ENCODE measurements at regions of chr3 and their contacts with region 1.

Region 1: GRCh38 chr3:194315088-194315964 is 35.8 kb downstream of the CPN2 start:
- DNase-seq: peak; percentile 98
- H3K4me3 Mint-ChIP-seq: peak overlapping the region; percentile 69
- H3K27ac Mint-ChIP-seq: peak overlapping the region; percentile 87
- H3K4me1 Mint-ChIP-seq: peaks cover 36% of the 10 kb centered on the region
- H3K27me3 Mint-ChIP-seq: no peaks in the 10 kb centered on the region
- CTCF ChIP-seq: peak; percentile 99

Region 2: GRCh38 chr3:193665370-193665989 is 649.8 kb before region 1 on chr3:
- CTCF ChIA-PET with region 1: interaction called, 20 read pairs
- intact Hi-C with region 1: loop called (anchors 2 kb)
- DNase-seq: no peak
- H3K4me3 Mint-ChIP-seq: no peak overlapping the region
- H3K27ac Mint-ChIP-seq: no peak overlapping the region
- H3K4me1 Mint-ChIP-seq: no peaks in the 10 kb centered on the region
- H3K27me3 Mint-ChIP-seq: no peaks in the 10 kb centered on the region
- CTCF ChIP-seq: peak; percentile 74

Region 3: GRCh38 chr3:193842029-193842798 is 473.1 kb before region 1 on chr3:
- CTCF ChIA-PET with region 1: interaction called, 17 read pairs
- intact Hi-C with region 1: loop called (anchors 5 kb)
- DNase-seq: no peak
- H3K4me3 Mint-ChIP-seq: peak overlapping the region; percentile 59
- H3K27ac Mint-ChIP-seq: peak overlapping the region; percentile 96
- H3K4me1 Mint-ChIP-seq: peaks cover 94% of the 10 kb centered on the region
- H3K27me3 Mint-ChIP-seq: no peaks in the 10 kb centered on the region
- CTCF ChIP-seq: no peak

Region 4: GRCh38 chr3:194009892-194010533 is 305.3 kb before region 1 on chr3:
- CTCF ChIA-PET with region 1: interaction called, 3 read pairs
- intact Hi-C with region 1: loop called (anchors 5 kb)
- DNase-seq: peak; percentile 34
- H3K4me3 Mint-ChIP-seq: no peak overlapping the region
- H3K27ac Mint-ChIP-seq: peak overlapping the region; percentile 15
- H3K4me1 Mint-ChIP-seq: peaks cover 48% of the 10 kb centered on the region
- H3K27me3 Mint-ChIP-seq: no peaks in the 10 kb centered on the region
- CTCF ChIP-seq: no peak

Region 5: DNA sequence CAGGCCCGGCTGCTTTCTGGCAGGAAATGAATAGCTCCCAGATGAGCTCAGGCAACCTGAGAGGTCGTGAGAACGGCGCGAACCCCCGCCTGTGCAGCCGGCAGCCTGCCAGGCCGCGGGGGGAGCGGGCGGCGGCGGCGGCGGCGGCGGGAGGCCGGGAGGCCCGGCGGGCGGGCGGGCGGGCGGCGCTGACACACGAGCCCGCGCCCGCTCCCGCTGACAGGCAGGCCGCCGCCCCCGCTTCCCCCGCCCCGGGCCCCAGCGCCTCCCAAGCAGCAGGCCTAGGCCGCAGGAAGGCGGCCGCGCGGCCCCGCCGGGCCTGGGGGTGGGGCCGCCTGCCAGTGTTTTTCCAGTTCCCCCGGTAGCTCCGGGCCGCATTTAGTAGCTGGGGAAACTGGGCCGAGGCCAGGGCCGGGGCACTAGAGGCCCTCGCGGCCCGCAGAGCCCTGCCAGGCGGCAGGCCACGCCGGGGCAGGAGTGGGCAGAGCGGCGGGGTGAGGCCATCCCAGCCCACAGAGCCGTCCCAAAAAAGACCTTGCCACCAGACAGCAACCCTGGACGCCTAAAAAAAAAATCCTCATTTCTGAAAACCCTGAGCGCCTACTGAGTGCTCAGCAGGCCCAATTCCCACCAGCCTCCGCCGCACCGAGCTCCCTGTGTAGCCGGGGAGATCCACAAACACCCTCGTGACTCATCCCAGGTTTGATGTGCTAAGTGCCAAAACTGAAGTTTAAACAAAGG is 173.7 kb before region 1 on chr3:
- CTCF ChIA-PET with region 1: interaction called, 69 read pairs
- intact Hi-C with region 1: loop called (anchors 2 kb)
- DNase-seq: peak; percentile 97
- H3K4me3 Mint-ChIP-seq: peak overlapping the region; percentile 92
- H3K27ac Mint-ChIP-seq: peak overlapping the region; percentile 83
- H3K4me1 Mint-ChIP-seq: peaks cover 35% of the 10 kb centered on the region
- H3K27me3 Mint-ChIP-seq: no peaks in the 10 kb centered on the region
- CTCF ChIP-seq: no peak

Region 6: DNA sequence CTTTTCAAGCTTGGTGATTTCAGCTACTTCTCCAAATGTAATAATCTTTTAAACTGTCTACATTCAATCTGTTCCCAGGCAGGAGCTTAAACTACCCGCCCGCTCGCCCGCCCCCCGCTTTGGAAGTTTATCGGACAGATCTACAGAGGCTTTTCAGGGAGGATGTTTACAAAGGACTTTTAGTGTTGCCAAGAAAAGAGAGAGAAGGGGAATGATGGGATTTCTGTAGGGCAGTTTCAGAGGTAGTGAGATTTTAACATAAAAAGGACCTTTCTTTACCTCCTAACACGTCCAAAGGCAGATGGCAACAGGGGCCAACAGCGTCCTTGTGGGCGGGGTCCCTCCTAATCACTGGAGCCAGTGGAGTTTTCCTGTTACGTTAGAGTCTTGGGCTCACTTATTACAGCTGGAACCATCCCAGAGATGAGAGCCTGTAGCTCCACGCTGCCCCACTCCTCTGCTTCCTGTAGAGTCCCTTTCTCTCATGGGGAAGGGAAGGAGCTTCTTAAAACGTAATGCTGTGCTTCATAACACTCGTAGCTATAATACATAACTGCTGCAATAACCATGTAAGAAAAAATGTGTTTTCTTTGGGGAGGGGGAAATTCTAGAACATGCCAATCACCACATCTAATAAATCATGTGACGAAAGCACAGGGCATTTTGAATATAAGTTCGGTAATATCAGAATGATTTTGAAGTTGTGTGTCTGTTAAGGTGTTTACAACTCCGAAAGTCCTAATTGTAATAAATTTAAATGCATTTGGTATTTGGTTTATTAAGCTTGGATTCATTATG is 148.4 kb before region 1 on chr3:
- CTCF ChIA-PET with region 1: interaction called, 13 read pairs
- intact Hi-C with region 1: loop called (anchors 1 kb)
- DNase-seq: no peak
- H3K4me3 Mint-ChIP-seq: no peak overlapping the region
- H3K27ac Mint-ChIP-seq: no peak overlapping the region
- H3K4me1 Mint-ChIP-seq: no peaks in the 10 kb centered on the region
- H3K27me3 Mint-ChIP-seq: no peaks in the 10 kb centered on the region
- CTCF ChIP-seq: no peak

Region 7: GRCh38 chr3:194265483-194265892 is 49.8 kb before region 1 on chr3:
- CTCF ChIA-PET with region 1: interaction called, 10 read pairs
- intact Hi-C with region 1: no loop called
- DNase-seq: no peak
- H3K4me3 Mint-ChIP-seq: no peak overlapping the region
- H3K27ac Mint-ChIP-seq: no peak overlapping the region
- H3K4me1 Mint-ChIP-seq: peaks cover 31% of the 10 kb centered on the region
- H3K27me3 Mint-ChIP-seq: no peaks in the 10 kb centered on the region
- CTCF ChIP-seq: no peak

Region 8: DNA sequence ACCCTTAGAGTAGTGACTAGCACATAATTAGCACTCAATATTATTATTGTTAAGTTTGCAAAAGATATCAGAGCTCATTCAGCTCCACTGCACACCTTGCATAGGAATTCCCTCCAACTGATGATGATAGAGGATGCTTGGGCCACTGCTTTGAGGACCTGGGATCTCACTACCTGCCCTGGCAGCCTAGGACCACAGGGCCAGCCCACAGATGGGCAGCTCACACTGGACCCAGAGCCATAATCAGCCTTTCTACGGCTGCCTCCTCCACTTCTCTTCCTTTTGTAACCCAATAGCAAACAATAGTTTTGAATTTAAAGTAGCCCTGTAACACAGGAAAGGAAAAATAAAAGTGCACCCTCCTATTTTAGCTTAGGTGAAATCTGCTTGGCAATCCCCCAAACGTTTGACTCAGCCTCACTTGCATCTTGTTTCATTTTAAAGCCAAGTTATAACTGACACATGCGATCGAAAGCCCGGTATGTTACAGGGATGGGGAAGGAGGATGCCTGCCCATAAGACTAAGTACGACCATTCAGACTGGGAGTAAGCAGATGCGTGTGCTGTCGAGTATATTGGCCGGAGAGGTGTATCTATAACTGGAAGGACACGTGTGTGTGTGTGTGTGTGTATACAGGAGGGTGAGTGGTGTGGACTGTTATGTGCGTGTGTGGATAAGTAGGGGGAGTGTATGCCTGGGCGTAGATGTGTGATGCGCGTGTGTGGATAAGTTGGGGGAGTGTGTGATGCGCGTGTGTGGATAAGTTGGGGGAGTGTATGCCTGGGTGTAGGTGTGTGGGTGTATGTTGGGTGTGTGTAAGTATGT is 30.1 kb before region 1 on chr3:
- CTCF ChIA-PET with region 1: no interaction called
- intact Hi-C with region 1: no loop called
- DNase-seq: no peak
- H3K4me3 Mint-ChIP-seq: no peak overlapping the region
- H3K27ac Mint-ChIP-seq: no peak overlapping the region
- H3K4me1 Mint-ChIP-seq: no peaks in the 10 kb centered on the region
- H3K27me3 Mint-ChIP-seq: peaks cover 34% of the 10 kb centered on the region
- CTCF ChIP-seq: no peak

Measured in Calu3 (cell line).